Kidney (tissue), 22 donors: ENCODE measurements at regions of chr19 and their contacts with region 1.

Region 1: GRCh38 chr19:56105090-56105701 is 15.9 kb downstream of the ZNF787 start:
- DNase-seq: peak in 4 of 5 donors; percentile 84 to 88 (median 85)
- H3K4me3 ChIP-seq: no peak overlapping the region
- H3K27ac ChIP-seq: peak overlapping the region in 1 of 2 donors; percentile 67
- H3K4me1 ChIP-seq: peaks cover 0 to 19% (median 8%) of the 10 kb centered on the region in 3 donors
- H3K27me3 ChIP-seq: no peaks in the 10 kb centered on the region
- CTCF ChIP-seq: peak; percentile 76

Region 2: GRCh38 chr19:56155124-56155687 is 50.0 kb after region 1 on chr19:
- intact Hi-C with region 1: loop called (anchors 10 kb)
- DNase-seq: no peak
- H3K4me3 ChIP-seq: no peak overlapping the region
- H3K27ac ChIP-seq: no peak overlapping the region
- H3K4me1 ChIP-seq: no peaks in the 10 kb centered on the region
- H3K27me3 ChIP-seq: no peaks in the 10 kb centered on the region
- CTCF ChIP-seq: peak; percentile 9

Region 3: DNA sequence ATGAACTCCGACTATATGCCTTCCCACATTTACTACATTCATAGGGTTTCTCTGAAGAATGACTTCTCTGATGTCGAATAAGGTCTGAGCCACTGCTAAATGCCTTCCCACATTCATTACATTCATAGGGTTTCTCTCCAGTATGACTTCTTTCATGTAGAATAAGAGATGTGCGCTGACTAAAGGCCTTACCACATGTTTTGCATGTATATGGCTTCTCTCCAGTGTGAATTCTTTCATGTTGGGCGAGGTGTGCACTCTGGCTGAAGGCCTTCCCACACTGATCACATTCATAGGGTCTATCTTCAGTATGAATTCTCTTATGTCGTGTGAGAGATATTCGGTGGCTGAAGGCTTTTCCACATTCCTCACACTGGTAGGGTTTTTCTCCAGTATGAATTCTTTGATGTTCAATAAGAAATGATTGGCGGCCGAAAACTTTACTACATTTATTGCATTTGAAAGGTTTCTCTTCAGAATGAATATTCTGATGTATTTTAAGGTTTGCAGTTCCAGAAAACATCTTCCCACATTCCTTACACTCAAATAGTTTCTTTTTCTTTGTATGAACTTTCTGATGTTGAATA is 336.1 kb after region 1 on chr19:
- intact Hi-C with region 1: no loop called
- DNase-seq: no peak
- H3K4me3 ChIP-seq: peak overlapping the region in 1 of 3 donors; percentile 21
- H3K27ac ChIP-seq: no peak overlapping the region
- H3K4me1 ChIP-seq: no peaks in the 10 kb centered on the region
- H3K27me3 ChIP-seq: no peaks in the 10 kb centered on the region
- CTCF ChIP-seq: no peak